HepG2 (cell line): ENCODE measurements at regions of chr1 and their contacts with region 1.

Region 1: GRCh38 chr1:167288390-167289074 is 67.8 kb downstream of the POU2F1 start:
- DNase-seq: peak; percentile 18
- ATAC-seq: peak; percentile 86
- H3K4me3 ChIP-seq: no peak overlapping the region
- H3K27ac ChIP-seq: peak overlapping the region; percentile 11
- H3K4me1 ChIP-seq: peaks cover 73% of the 10 kb centered on the region
- H3K27me3 ChIP-seq: no peaks in the 10 kb centered on the region
- CTCF ChIP-seq: no peak
- EP300 ChIP-seq: no peak
- POLR2A ChIP-seq: no peak
- RAD21 ChIP-seq: no peak

Region 2: GRCh38 chr1:167330601-167331293 is 42.2 kb after region 1 on chr1:
- CTCF ChIA-PET with region 1: no interaction called
- POLR2A ChIA-PET with region 1: no interaction called
- in situ Hi-C with region 1: no loop called
- intact Hi-C with region 1: loop called (anchors 5 kb)
- DNase-seq: no peak
- ATAC-seq: no peak
- H3K4me3 ChIP-seq: no peak overlapping the region; a peak in 2 of 6 replicates
- H3K27ac ChIP-seq: no peak overlapping the region
- H3K4me1 ChIP-seq: peaks cover 49% of the 10 kb centered on the region
- H3K27me3 ChIP-seq: no peaks in the 10 kb centered on the region
- CTCF ChIP-seq: no peak
- EP300 ChIP-seq: no peak
- POLR2A ChIP-seq: no peak
- RAD21 ChIP-seq: no peak